ENCODE measurements at regions of chr1 and their contacts with region 1.

Region 1: GRCh38 chr1:25568090-25568833 is 24.9 kb downstream of the LDLRAP1 start:
- DNase-seq: peak in 6 of 10 donors; percentile 48 to 76 (median 58)
- H3K4me3 ChIP-seq: no peak overlapping the region
- H3K27ac ChIP-seq: peak overlapping the region; percentile 79 to 99 (median 98)
- H3K27me3 ChIP-seq: no peaks in the 10 kb centered on the region
- CTCF ChIP-seq: peak in 37 of 56 donors; percentile 7 to 50 (median 23)

Region 2: GRCh38 chr1:25161981-25162380 is 406.3 kb before region 1 on chr1:
- intact Hi-C with region 1: no loop called
- DNase-seq: no peak
- H3K4me3 ChIP-seq: no peak overlapping the region
- H3K27ac ChIP-seq: no peak overlapping the region
- H3K27me3 ChIP-seq: no peaks in the 10 kb centered on the region
- CTCF ChIP-seq: no peak

Region 3: DNA sequence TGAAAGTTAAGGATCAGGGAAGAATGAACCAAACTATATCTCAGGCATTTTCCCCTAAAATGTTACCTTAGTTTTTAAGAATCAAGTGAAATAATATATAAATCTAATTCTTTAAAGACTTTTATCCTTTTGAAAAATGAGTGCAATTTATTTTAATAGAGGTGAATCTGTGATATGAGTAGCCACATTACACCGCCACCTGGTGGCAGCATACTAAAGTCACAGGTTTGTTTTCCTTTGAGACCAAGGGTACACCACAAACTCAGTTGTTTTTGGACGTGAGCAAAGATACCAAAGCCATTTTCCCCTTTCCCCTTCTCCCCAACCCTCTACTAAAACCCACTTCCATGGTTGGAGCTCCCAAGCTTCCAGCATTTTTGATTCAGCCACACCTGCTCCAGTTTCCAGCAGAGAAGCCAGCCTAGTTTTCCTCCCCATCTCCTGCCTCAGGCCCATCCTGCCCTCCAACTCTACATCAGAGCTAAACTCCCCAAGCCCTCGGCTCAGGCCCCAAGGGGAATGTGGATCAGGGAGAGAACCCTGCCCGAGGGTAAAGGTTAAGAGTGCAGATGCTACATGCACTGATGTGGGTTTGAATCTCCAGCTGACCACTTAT is 47.7 kb before region 1 on chr1:
- intact Hi-C with region 1: loop called in 1 of 2 experiments (anchors 2 kb)
- DNase-seq: peak in 8 of 10 donors; percentile 48 to 85 (median 76)
- H3K4me3 ChIP-seq: no peak overlapping the region
- H3K27ac ChIP-seq: peak overlapping the region in 26 of 59 donors; percentile 3 to 70 (median 38)
- H3K27me3 ChIP-seq: no peaks in the 10 kb centered on the region
- CTCF ChIP-seq: peak; percentile 67 to 97 (median 89)

Region 4: GRCh38 chr1:25610822-25611630 is 42.8 kb after region 1 on chr1:
- intact Hi-C with region 1: loop called (anchors 2 kb)
- DNase-seq: no peak
- H3K4me3 ChIP-seq: no peak overlapping the region
- H3K27ac ChIP-seq: peak overlapping the region in 1 of 59 donors; percentile 48
- H3K27me3 ChIP-seq: no peaks in the 10 kb centered on the region
- CTCF ChIP-seq: peak in 3 of 56 donors; percentile 7 to 13 (median 11)

Region 5: GRCh38 chr1:25805863-25806225 is 237.6 kb after region 1 on chr1:
- intact Hi-C with region 1: loop called in 1 of 2 experiments (anchors 5 kb)
- DNase-seq: peak in 9 of 10 donors; percentile 63 to 87 (median 76)
- H3K4me3 ChIP-seq: peak overlapping the region in 3 of 59 donors; percentile 11 to 19 (median 12)
- H3K27ac ChIP-seq: peak overlapping the region in 57 of 59 donors; percentile 39 to 93 (median 83)
- H3K27me3 ChIP-seq: no peaks in the 10 kb centered on the region
- CTCF ChIP-seq: no peak

Region 6: GRCh38 chr1:25997828-25998761 is 429.8 kb after region 1 on chr1 and contains the start of gene PAFAH2:
- intact Hi-C with region 1: loop called in 1 of 2 experiments (anchors 10 kb)
- DNase-seq: peak; percentile 92 to 98 (median 96)
- H3K4me3 ChIP-seq: peak within 1 kb of the TSS; percentile 39 to 93 (median 77)
- H3K27ac ChIP-seq: peak within 1 kb of the TSS; percentile 47 to 95 (median 89)
- H3K27me3 ChIP-seq: no peaks in the 10 kb centered on the region
- CTCF ChIP-seq: peak; percentile 98 to 100 (median 99)
- total RNA-seq, gene PAFAH2: 3.7 to 19.3 (median 8.5) TPM

Measured in dorsolateral prefrontal cortex (tissue), 120 donors.